ENCODE measurements at regions of chr3 and their contacts with region 1.

Region 1: GRCh38 chr3:86563400-86563970 is 427.5 kb downstream of the VGLL3 start:
- DNase-seq: peak in 1 of 9 donors; percentile 2
- ATAC-seq: no peak
- H3K4me3 ChIP-seq: no peak overlapping the region
- H3K4me3 Mint-ChIP-seq: no peak overlapping the region
- H3K27ac ChIP-seq: no peak overlapping the region
- H3K27ac Mint-ChIP-seq: no peak overlapping the region
- H3K4me1 ChIP-seq: no peaks in the 10 kb centered on the region
- H3K4me1 Mint-ChIP-seq: no peaks in the 10 kb centered on the region
- H3K27me3 ChIP-seq: no peaks in the 10 kb centered on the region
- H3K27me3 Mint-ChIP-seq: no peaks in the 10 kb centered on the region

Region 2: GRCh38 chr3:85821130-85821756 is 742.2 kb before region 1 on chr3:
- CTCF ChIA-PET with region 1: no interaction called
- POLR2A ChIA-PET with region 1: no interaction called
- intact Hi-C with region 1: loop called in 1 of 2 experiments (anchors 5 kb)
- DNase-seq: no peak
- ATAC-seq: no peak
- H3K4me3 ChIP-seq: no peak overlapping the region
- H3K4me3 Mint-ChIP-seq: no peak overlapping the region
- H3K27ac ChIP-seq: no peak overlapping the region
- H3K27ac Mint-ChIP-seq: no peak overlapping the region
- H3K4me1 ChIP-seq: no peaks in the 10 kb centered on the region
- H3K4me1 Mint-ChIP-seq: no peaks in the 10 kb centered on the region
- H3K27me3 ChIP-seq: no peaks in the 10 kb centered on the region
- H3K27me3 Mint-ChIP-seq: no peaks in the 10 kb centered on the region